ENCODE measurements at regions of chr10 and their contacts with region 1.

Region 1: GRCh38 chr10:80382989-80383388 is 25.4 kb upstream of the PRXL2A start:
- DNase-seq: peak; percentile 19
- ATAC-seq: peak; percentile 65
- H3K4me3 ChIP-seq: no peak overlapping the region
- H3K27ac ChIP-seq: no peak overlapping the region
- H3K4me1 ChIP-seq: no peaks in the 10 kb centered on the region
- H3K27me3 ChIP-seq: peaks cover 0 to 3% of the 10 kb centered on the region in 2 experiments; a peak in 1 of 4 replicates
- CTCF ChIP-seq: peak; percentile 52 to 68 (median 66)
- EP300 ChIP-seq: no peak
- POLR2A ChIP-seq: no peak
- RAD21 ChIP-seq: peak; percentile 72

Region 2: DNA sequence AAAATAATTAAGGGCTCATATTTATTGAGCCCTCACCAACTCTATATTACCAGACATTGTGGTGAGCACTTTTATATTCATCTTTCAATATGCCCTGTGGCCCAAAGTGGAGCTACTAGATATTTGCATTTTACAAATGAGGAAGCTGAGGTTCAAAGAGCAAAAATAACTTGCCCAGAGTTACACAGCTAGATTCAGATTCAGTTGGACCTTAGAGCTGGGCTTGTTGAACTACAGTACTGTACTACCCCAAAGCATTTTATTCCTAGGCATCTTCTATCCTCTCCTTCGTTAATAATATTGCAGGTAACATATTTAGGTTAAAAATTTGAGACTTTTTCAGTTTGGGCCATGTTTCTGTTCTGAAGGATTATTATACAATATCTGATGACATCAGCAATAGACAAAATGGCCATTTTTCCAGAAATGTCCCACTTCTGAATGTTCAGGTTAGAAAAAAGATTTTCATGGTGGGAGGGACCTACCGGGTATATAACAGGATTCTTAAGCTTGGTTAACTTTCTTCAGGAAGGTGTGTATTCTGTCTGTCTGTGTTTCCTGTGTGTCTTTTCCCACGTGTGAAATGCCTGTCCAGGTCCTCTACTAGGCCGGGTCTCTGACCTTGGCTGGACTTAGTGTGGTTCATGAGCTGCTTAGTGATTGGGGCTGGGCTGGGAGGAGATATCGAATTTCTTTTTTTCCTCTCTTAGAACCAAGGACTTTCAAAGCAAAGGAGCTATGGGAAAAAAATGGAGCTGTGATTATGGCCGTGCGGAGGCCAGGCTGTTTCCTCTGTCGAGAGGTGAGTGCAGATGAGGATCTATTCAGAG is 38.9 kb after region 1 on chr10:
- CTCF ChIA-PET with region 1: interaction called, 23 read pairs
- POLR2A ChIA-PET with region 1: no interaction called
- RAD21 ChIA-PET with region 1: no interaction called
- SMC1A ChIA-PET with region 1: interaction called, 15 read pairs
- in situ Hi-C with region 1: no loop called
- intact Hi-C with region 1: no loop called
- DNase-seq: peak; percentile 40
- ATAC-seq: peak; percentile 92
- H3K4me3 ChIP-seq: peak overlapping the region; percentile 23; the same call in 1 of the 2 replicates
- H3K27ac ChIP-seq: peak overlapping the region; percentile 47
- H3K4me1 ChIP-seq: peaks cover 21% of the 10 kb centered on the region
- H3K27me3 ChIP-seq: no peaks in the 10 kb centered on the region
- CTCF ChIP-seq: no peak
- EP300 ChIP-seq: no peak
- POLR2A ChIP-seq: no peak
- RAD21 ChIP-seq: no peak

Region 3: GRCh38 chr10:80437231-80437630 is 54.2 kb after region 1 on chr10:
- CTCF ChIA-PET with region 1: interaction called, 24 read pairs
- POLR2A ChIA-PET with region 1: no interaction called
- RAD21 ChIA-PET with region 1: no interaction called
- SMC1A ChIA-PET with region 1: interaction called, 11 read pairs
- in situ Hi-C with region 1: no loop called
- intact Hi-C with region 1: no loop called
- DNase-seq: no peak
- ATAC-seq: no peak
- H3K4me3 ChIP-seq: no peak overlapping the region
- H3K27ac ChIP-seq: no peak overlapping the region
- H3K4me1 ChIP-seq: peaks cover 7% of the 10 kb centered on the region; the same call in 1 of the 2 replicates
- H3K27me3 ChIP-seq: no peaks in the 10 kb centered on the region; a peak in 1 of 4 replicates
- CTCF ChIP-seq: no peak
- EP300 ChIP-seq: no peak
- POLR2A ChIP-seq: no peak
- RAD21 ChIP-seq: no peak

Region 4: GRCh38 chr10:80509403-80510161 is 126.6 kb after region 1 on chr10:
- CTCF ChIA-PET with region 1: interaction called, 15 read pairs
- POLR2A ChIA-PET with region 1: no interaction called
- RAD21 ChIA-PET with region 1: interaction called, 18 read pairs
- SMC1A ChIA-PET with region 1: interaction called, 17 read pairs
- in situ Hi-C with region 1: loop called (anchors 5 kb)
- intact Hi-C with region 1: loop called (anchors 5 kb)
- DNase-seq: no peak
- ATAC-seq: no peak
- H3K4me3 ChIP-seq: no peak overlapping the region
- H3K27ac ChIP-seq: no peak overlapping the region
- H3K4me1 ChIP-seq: no peaks in the 10 kb centered on the region
- H3K27me3 ChIP-seq: no peaks in the 10 kb centered on the region
- CTCF ChIP-seq: no peak
- EP300 ChIP-seq: no peak
- POLR2A ChIP-seq: no peak
- RAD21 ChIP-seq: no peak